Uterus (tissue), 4 donors: ENCODE measurements at regions of chrX and their contacts with region 1.

Region 1: DNA sequence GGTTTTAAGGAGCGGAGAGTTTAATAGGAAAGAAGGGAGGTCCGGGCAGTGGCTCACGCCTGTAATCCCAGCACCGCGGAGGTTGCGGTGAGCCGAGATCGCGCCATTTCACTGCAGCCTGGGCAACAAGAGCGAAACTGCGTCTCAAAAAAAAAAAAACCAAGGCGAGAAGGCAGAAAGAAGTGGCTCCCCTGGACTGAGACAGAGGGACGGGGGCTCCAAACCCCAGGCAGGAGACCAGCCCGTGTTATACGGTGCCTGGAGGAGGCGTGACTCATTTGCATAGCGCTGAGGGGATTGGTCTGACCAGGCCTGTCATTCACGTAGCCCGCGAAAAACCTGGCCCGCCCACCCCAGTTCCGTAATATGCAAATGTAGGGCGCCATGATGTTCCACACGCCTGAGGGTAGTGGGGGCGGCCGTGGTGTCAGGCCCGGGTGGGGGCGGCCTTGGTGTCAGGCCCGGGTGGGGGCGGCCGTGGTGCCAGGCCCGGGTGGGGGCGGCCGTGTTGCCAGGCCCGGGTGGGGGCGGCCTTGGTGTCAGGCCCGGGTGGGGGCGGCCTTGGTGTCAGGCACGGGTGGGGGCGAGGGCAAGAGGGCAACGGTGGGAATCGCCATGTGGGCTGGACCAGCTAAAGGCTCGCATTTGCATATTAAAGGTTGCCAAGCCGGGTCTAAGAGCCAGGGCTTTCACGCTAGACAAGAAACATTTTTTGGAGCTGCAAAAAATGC is 2.1 kb downstream of the PLCXD1 start:
- DNase-seq: peak; percentile 85 to 91
- H3K4me3 ChIP-seq: peak overlapping the region; percentile 34 to 51
- H3K27ac ChIP-seq: peak overlapping the region; percentile 47 to 70
- H3K4me1 ChIP-seq: no peaks in the 10 kb centered on the region
- H3K27me3 ChIP-seq: no peaks in the 10 kb centered on the region
- CTCF ChIP-seq: no peak
- POLR2A ChIP-seq: no peak

Region 2: GRCh38 chrX:357693-358471 is 74.6 kb after region 1 on chrX:
- intact Hi-C with region 1: no loop called
- DNase-seq: no peak
- H3K4me3 ChIP-seq: no peak overlapping the region
- H3K27ac ChIP-seq: no peak overlapping the region
- H3K4me1 ChIP-seq: no peaks in the 10 kb centered on the region
- H3K27me3 ChIP-seq: no peaks in the 10 kb centered on the region
- CTCF ChIP-seq: no peak
- POLR2A ChIP-seq: no peak

Region 3: DNA sequence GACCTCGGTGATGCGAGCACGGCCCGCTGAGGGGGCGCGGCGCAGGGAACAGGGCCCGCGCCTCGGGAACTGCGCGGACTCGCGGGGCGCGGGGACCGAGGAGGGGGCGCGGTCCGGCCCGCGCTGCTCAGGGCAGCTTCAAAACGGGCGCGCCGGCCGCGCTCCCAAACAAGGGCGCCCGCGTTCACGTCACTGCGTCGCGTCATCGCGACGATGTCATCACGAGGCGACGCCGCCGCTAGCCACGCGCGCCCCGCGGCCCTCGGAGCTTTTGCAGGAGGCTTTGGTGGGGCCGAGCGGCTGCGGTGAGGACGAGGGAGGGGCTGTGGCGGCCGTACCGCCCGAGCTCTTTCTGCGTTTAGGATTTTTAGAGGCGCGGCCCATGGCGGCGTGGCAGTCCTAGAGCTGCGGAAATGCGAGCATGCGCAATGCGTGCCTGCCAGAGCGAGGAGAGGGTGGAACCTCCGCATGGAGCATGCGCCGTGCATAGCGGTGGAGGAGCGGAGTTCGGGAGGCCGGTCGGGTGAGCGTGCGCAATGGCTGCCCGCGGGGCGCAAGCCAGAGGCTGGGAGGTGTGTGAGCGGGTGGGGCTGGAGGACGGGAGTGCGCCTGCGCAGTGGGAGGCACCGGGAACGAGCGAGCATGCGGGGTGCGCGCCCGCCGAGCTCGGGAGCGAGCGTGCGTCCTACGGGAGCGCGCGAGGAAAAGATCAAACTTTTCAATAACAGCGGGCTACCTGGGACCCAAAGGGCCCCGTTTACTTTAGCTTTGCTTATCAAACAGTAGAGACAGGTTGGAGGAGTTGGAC is 103.7 kb after region 1 on chrX and contains the start of gene PPP2R3B:
- intact Hi-C with region 1: loop called (anchors 10 kb)
- DNase-seq: peak; percentile 98 to 99
- H3K4me3 ChIP-seq: peak within 1 kb of the TSS; percentile 85 to 91
- H3K27ac ChIP-seq: peak within 1 kb of the TSS; percentile 98
- H3K4me1 ChIP-seq: peaks cover 0 to 4% of the 10 kb centered on the region in 2 donors
- H3K27me3 ChIP-seq: no peaks in the 10 kb centered on the region
- CTCF ChIP-seq: peak in 2 of 4 experiments; percentile 16 to 44
- POLR2A ChIP-seq: peak; percentile 27 to 63
- total RNA-seq, gene PPP2R3B: 4.1 to 16.1 (median 9.4) TPM